Breast epithelium (tissue), 4 donors: ENCODE measurements at regions of chr6 and their contacts with region 1.

Region 1: GRCh38 chr6:11241793-11242201 is 9.3 kb upstream of the NEDD9 start:
- DNase-seq: no peak
- H3K4me3 ChIP-seq: no peak overlapping the region
- H3K27ac ChIP-seq: peak overlapping the region in 1 of 2 donors; percentile 55
- H3K4me1 ChIP-seq: no peaks in the 10 kb centered on the region
- H3K27me3 ChIP-seq: no peaks in the 10 kb centered on the region
- CTCF ChIP-seq: peak; percentile 52 to 68 (median 62)
- POLR2A ChIP-seq: no peak

Region 2: GRCh38 chr6:11288047-11288461 is 46.3 kb after region 1 on chr6:
- intact Hi-C with region 1: loop called (anchors 2 kb)
- DNase-seq: peak; percentile 63 to 65
- H3K4me3 ChIP-seq: no peak overlapping the region
- H3K27ac ChIP-seq: peak overlapping the region in 1 of 2 donors; percentile 30
- H3K4me1 ChIP-seq: no peaks in the 10 kb centered on the region
- H3K27me3 ChIP-seq: no peaks in the 10 kb centered on the region
- CTCF ChIP-seq: no peak
- POLR2A ChIP-seq: no peak

Region 3: GRCh38 chr6:11366183-11366933 is 124.6 kb after region 1 on chr6:
- intact Hi-C with region 1: loop called (anchors 10 kb)
- DNase-seq: no peak
- H3K4me3 ChIP-seq: no peak overlapping the region
- H3K27ac ChIP-seq: peak overlapping the region; percentile 61 to 77
- H3K4me1 ChIP-seq: no peaks in the 10 kb centered on the region
- H3K27me3 ChIP-seq: no peaks in the 10 kb centered on the region
- CTCF ChIP-seq: no peak
- POLR2A ChIP-seq: no peak